Left cardiac atrium (tissue), 4 donors: ENCODE measurements at regions of chr2 and their contacts with region 1.

Region 1: GRCh38 chr2:197011799-197012641 is 85.5 kb upstream of the PGAP1 start:
- DNase-seq: no peak
- ATAC-seq: peak; percentile 59 to 67

Region 2: DNA sequence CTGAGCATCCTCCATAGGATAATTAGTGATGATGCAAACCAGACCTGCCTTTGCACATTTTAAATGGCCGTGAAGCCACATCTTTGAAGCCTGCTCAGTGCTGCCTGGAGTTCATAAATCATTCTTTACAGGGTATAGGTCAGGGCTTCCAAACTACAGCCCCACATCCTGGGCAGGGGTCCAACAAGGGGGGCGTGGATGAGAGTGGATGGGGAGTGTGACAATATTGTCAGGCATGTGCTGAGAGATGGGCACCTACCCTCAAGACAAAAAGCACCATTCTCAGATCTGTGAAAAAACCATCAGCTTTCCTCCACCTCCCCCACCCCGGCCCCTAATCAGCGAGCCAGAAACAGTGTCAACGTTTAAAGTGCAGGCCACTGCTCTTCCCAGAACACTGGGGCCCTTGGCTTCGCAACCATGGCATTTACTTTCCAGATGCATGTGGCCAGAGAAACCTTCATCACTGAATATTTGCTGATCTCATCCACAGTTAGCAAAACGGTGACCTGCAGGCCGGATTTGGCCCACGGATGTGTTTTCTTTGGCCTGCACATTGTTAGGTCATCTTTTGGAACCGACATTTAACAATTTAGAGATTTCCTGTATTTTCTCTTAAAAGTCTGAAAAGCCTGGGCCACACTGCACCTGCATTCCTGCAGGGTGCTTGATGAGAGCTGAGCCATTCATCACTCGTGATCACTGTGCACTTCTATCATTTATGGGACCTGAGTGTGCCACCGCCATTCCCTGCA is 167.9 kb after region 1 on chr2:
- intact Hi-C with region 1: loop called in 1 of 2 experiments (anchors 10 kb)
- DNase-seq: peak; percentile 49
- ATAC-seq: peak in 1 of 2 donors; percentile 50